ENCODE measurements at regions of chr7 and their contacts with region 1.

Region 1: DNA sequence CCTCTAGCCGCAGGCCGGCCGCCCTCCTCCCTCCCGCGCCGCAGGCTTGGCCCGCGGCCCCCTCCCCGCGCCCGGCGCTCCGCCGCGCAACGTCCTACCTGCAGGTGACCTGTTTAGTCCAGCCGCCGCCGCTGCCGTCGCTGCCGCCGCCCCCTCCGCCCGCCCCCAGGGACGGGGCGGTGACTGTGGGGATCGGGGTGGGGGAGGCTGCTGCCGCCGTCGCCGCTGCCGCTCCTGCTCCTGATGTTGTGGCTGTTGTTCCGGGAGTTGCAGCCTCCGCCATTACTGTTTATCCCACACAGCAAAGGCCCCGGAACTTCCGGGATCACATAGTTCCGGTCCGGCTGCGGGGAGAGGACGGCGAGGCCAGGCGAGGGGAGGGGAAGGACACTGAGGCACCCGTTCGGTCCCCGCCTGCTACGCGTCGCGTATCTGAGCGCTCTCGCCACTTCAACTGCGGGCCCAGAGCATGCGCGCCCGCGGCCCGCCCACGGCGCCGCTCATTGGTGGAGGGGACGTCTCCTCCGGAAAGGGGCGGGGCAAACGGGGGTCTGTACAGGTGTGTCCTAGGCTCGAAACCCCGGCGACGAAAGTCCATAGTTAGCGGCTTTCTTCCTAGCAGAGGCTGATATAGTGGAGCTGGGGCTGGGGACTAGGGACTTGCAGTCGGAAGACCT is at the start of gene MKRN1:
- DNase-seq: peak; percentile 92
- ATAC-seq: peak; percentile 89
- H3K4me3 Mint-ChIP-seq: peak within 1 kb of the TSS; percentile 100
- H3K27ac Mint-ChIP-seq: peak within 1 kb of the TSS; percentile 99
- H3K4me1 Mint-ChIP-seq: peaks cover 30% of the 10 kb centered on the region
- H3K27me3 Mint-ChIP-seq: no peaks in the 10 kb centered on the region
- CTCF ChIP-seq: no peak
- total RNA-seq, gene MKRN1: 94.3 and 99.9 TPM in 2 replicates

Region 2: GRCh38 chr7:140062528-140063299 is 416.5 kb before region 1 on chr7 and contains the start of gene PARP12:
- CTCF ChIA-PET with region 1: no interaction called
- POLR2A ChIA-PET with region 1: no interaction called
- intact Hi-C with region 1: loop called (anchors 2 kb)
- DNase-seq: peak; percentile 93
- ATAC-seq: peak; percentile 81
- H3K4me3 Mint-ChIP-seq: peak within 1 kb of the TSS; percentile 97
- H3K27ac Mint-ChIP-seq: peak within 1 kb of the TSS; percentile 98
- H3K4me1 Mint-ChIP-seq: peaks cover 47% of the 10 kb centered on the region
- H3K27me3 Mint-ChIP-seq: no peaks in the 10 kb centered on the region
- CTCF ChIP-seq: no peak
- total RNA-seq, gene PARP12: 104 and 128 TPM in 2 replicates

Region 3: DNA sequence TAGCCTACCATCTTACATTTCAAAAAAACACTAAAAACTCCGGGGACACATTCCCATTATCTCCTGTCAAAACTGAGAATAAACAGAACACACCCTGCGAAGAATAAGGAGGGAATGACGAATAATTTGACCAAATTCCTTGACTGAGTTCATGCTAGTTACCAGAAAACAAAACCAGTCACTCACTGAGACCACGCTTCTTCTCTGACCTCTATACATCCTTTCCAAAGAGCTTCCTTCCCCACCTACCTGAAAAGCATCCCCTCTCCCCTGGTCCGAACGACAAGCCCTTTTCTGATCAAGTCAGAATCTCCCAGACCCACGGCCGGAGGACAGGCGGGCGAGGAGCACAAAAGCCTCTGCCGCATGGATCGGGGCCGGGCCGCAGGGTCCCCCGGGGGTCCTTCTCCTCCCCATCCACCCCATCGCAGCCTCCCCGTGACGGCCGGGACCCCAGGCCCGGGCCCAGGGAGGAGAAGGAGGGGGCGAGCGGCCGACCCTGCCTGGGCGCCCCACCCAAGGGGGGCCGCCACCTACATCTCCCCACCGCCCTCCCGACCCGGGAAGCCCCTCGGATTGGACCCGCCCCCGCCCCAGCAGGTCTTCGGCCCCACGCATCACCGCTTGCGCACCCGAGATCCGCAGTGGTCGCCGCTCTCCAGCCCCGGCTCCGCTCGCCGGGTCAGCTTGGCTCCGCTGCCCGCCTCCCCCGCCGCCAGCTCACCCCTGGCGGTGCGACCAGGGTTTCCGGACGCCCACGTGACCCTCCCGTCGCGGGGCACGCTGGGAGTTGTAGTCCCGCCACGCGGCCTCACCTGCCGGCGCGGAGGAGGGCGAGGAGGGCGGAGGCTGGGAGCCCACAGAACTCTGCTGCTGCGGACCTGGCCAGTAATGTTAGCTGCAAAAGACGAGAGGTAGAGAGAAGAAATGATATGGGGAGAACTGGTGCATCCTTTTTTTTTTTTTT is 81.1 kb before region 1 on chr7 and contains the start of gene SLC37A3:
- CTCF ChIA-PET with region 1: interaction called, 3 read pairs
- POLR2A ChIA-PET with region 1: interaction called, 3 read pairs
- intact Hi-C with region 1: loop called (anchors 2 kb)
- DNase-seq: peak; percentile 85
- ATAC-seq: peak; percentile 96
- H3K4me3 Mint-ChIP-seq: peak within 1 kb of the TSS; percentile 88
- H3K27ac Mint-ChIP-seq: peak within 1 kb of the TSS; percentile 65
- H3K4me1 Mint-ChIP-seq: peaks cover 8% of the 10 kb centered on the region
- H3K27me3 Mint-ChIP-seq: peaks cover 1% of the 10 kb centered on the region
- CTCF ChIP-seq: no peak
- total RNA-seq, gene SLC37A3: 10.6 and 12.4 TPM in 2 replicates

Region 4: DNA sequence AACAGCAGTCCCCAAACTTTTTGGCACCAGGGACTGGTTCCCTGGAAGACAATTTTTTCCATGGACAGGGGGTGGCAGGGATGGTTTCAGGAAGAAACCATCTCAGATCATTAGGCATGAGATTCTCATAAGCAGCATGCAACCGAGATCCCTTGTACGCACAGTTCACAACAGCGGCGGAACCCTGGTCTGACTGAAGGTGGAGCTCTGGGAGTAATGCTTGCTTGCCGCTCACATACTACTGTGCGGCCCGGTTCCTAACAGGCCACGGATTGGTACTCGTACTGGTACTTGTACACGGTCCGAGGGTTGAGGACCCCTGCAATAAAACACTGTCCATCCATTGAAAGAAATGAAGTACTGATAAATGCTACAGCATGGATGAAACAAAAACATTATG is 32.7 kb before region 1 on chr7:
- CTCF ChIA-PET with region 1: no interaction called
- POLR2A ChIA-PET with region 1: no interaction called
- intact Hi-C with region 1: no loop called
- DNase-seq: no peak
- ATAC-seq: no peak
- H3K4me3 Mint-ChIP-seq: no peak overlapping the region
- H3K27ac Mint-ChIP-seq: no peak overlapping the region
- H3K4me1 Mint-ChIP-seq: peaks cover 21% of the 10 kb centered on the region
- H3K27me3 Mint-ChIP-seq: no peaks in the 10 kb centered on the region
- CTCF ChIP-seq: no peak

Region 5: DNA sequence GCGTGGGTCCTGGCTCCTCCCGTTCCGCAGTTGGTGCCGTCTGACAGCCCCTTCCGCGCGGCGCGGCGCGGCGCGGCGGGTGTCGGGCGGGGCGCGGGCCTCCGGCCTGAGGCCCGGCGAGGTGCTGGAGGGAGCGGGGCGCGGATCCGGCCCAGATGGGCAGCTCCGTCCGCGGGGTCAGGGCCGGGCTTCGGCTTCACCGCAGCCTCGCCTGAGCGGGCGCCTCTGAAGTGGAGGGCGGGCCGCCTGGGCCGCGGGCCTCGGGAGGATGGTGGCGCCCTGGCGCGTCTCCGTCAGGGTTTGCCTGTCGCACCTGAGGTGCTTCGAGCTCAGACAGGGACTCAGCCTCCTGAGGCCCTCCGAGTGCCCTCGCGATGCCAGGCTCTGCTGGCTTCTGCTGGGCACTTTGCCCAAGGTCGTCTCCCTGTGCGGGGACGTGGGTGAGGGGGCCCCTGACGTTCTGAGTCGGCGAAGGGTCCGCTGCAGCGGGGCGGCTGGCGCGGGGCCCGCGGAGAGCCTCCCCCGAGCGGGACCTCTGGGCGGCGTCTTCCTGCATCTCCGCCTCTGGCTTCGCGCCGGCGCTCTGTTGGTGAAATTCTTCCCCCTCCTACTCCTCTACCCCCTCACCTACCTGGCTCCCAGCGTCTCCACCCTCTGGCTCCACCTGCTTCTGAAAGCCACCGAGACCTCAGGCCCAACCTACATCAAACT is 194.0 kb after region 1 on chr7:
- CTCF ChIA-PET with region 1: no interaction called
- POLR2A ChIA-PET with region 1: no interaction called
- intact Hi-C with region 1: loop called (anchors 1 kb)
- DNase-seq: peak; percentile 67
- ATAC-seq: peak; percentile 58
- H3K4me3 Mint-ChIP-seq: peak overlapping the region; percentile 88
- H3K27ac Mint-ChIP-seq: peak overlapping the region; percentile 86
- H3K4me1 Mint-ChIP-seq: peaks cover 57% of the 10 kb centered on the region
- H3K27me3 Mint-ChIP-seq: no peaks in the 10 kb centered on the region
- CTCF ChIP-seq: no peak

Region 6: GRCh38 chr7:140924019-140924820 is 445.0 kb after region 1 on chr7:
- CTCF ChIA-PET with region 1: no interaction called
- POLR2A ChIA-PET with region 1: interaction called, 3 read pairs
- intact Hi-C with region 1: loop called (anchors 1 kb)
- DNase-seq: peak; percentile 71
- ATAC-seq: peak; percentile 75
- H3K4me3 Mint-ChIP-seq: no peak overlapping the region
- H3K27ac Mint-ChIP-seq: no peak overlapping the region
- H3K4me1 Mint-ChIP-seq: peaks cover 28% of the 10 kb centered on the region
- H3K27me3 Mint-ChIP-seq: no peaks in the 10 kb centered on the region
- CTCF ChIP-seq: no peak

Region 7: GRCh38 chr7:141654551-141654950 is 1175.4 kb after region 1 on chr7:
- CTCF ChIA-PET with region 1: no interaction called
- POLR2A ChIA-PET with region 1: interaction called, 3 read pairs
- intact Hi-C with region 1: loop called (anchors 2 kb)
- DNase-seq: no peak
- ATAC-seq: peak; percentile 67
- H3K4me3 Mint-ChIP-seq: no peak overlapping the region
- H3K27ac Mint-ChIP-seq: peak overlapping the region; percentile 72
- H3K4me1 Mint-ChIP-seq: peaks cover 15% of the 10 kb centered on the region
- H3K27me3 Mint-ChIP-seq: no peaks in the 10 kb centered on the region
- CTCF ChIP-seq: no peak